ENCODE measurements at regions of chr20 and their contacts with region 1.

Region 1: DNA sequence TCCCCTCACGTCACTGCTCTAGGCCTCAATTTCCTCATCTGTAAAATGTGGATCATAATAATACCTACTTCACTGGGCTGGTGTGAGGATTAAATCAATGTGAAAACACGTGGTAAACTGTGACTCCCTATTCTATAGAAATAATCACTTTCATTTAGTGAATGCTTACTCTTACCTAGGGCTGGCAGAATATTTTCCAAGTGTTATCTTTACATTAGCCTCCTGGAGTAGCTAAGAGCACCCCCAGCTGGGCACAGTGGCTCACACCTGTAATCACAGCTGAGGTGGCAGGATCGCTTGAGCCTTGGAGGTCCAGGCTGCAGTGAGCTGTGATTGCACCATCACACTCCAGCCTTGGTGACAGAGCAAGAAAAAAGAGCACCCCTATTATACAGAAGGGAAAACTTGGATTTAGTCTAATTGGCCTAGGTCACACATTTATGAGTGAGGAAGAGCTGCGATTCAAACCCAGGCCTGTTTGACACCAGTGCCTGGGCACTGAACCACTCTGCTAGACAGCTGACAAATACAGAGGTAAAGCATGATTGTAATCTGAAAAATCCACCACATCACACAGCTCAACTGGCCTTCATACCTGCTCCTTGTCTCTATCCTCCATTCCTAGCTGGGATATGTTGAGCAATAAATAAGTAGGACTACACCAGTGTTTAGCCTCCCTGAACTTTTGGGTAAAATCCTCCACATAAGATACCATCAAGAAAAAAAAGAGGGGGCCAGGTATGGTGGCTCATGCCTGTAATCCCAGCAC is 1.4 kb upstream of the SNTA1 start:
- DNase-seq: peak in 1 of 10 donors; percentile 23
- H3K4me3 ChIP-seq: peak overlapping the region in 46 of 59 donors; percentile 54 to 87 (median 78)
- H3K27ac ChIP-seq: peak overlapping the region in 43 of 59 donors; percentile 2 to 88 (median 67)
- H3K27me3 ChIP-seq: no peaks in the 10 kb centered on the region
- CTCF ChIP-seq: peak in 22 of 56 donors; percentile 5 to 51 (median 20)

Region 2: GRCh38 chr20:33401184-33401920 is 43.6 kb before region 1 on chr20 and contains the start of gene CDK5RAP1:
- intact Hi-C with region 1: loop called in 1 of 2 experiments (anchors 5 kb)
- DNase-seq: peak; percentile 72 to 90 (median 88)
- H3K4me3 ChIP-seq: peak within 1 kb of the TSS; percentile 65 to 100 (median 96)
- H3K27ac ChIP-seq: peak within 1 kb of the TSS in 53 of 59 donors; percentile 11 to 90 (median 65)
- H3K27me3 ChIP-seq: no peaks in the 10 kb centered on the region
- CTCF ChIP-seq: peak in 37 of 56 donors; percentile 9 to 56 (median 31)
- total RNA-seq, gene CDK5RAP1: 30.0 to 60.3 (median 42.9) TPM

Region 3: DNA sequence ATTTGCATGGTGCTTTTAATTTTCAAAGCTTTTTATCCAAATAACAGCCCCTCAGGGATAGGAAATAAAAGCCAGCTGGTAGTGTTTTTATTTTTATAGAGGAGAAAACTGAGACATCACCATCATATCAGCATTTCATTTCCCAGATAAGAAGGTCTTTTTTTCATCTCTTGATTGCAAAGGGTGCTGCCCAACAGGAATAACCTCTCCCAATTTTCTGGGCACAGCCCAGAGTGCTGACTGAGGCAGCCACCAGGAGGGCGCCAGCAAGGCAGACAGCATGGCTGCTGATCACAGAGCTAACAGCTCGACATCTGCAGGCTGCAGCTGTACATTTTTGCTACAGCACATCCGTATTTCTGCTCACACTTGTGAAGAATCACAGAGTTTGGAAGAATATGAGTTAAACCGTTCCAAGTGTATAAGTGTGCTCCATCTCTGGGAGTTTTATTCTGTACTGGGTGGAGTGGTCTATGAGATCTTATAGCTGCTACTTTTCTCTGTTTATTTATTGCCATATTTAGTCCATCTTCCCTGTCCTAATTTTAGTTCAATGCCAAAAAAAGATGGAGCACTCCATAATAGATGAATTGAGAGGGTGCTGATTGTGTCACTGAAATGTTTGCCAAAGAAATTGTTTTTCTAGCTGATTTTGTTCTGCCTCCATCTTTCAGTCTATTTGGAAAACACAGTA is 131.6 kb after region 1 on chr20:
- intact Hi-C with region 1: no loop called
- DNase-seq: peak in 9 of 10 donors; percentile 25 to 73 (median 61)
- H3K4me3 ChIP-seq: peak overlapping the region in 23 of 59 donors; percentile 3 to 44 (median 15)
- H3K27ac ChIP-seq: peak overlapping the region; percentile 21 to 89 (median 75)
- H3K27me3 ChIP-seq: no peaks in the 10 kb centered on the region
- CTCF ChIP-seq: peak in 46 of 56 donors; percentile 12 to 64 (median 40)

Measured in dorsolateral prefrontal cortex (tissue), 120 donors.